Naive thymus-derived CD8-positive, alpha-beta T cell (primary cell): ENCODE measurements at regions of chr17 and their contacts with region 1.

Region 1: GRCh38 chr17:63773381-63774140 is at the start of gene CCDC47:
- DNase-seq: peak; percentile 94 to 99 (median 98)
- ATAC-seq: peak; percentile 86 to 88
- H3K4me3 Mint-ChIP-seq: peak within 1 kb of the TSS; percentile 87 to 99 (median 96)
- H3K27ac Mint-ChIP-seq: peak within 1 kb of the TSS; percentile 91 to 100 (median 99)
- H3K4me1 Mint-ChIP-seq: peaks cover 30 to 80% (median 70%) of the 10 kb centered on the region in 4 donors
- H3K27me3 Mint-ChIP-seq: no peaks in the 10 kb centered on the region
- polyA plus RNA-seq, gene CCDC47: 21.8 to 34.8 (median 26.0) TPM

Region 2: GRCh38 chr17:63707151-63707550 is 66.4 kb before region 1 on chr17:
- POLR2A ChIA-PET with region 1: interaction called, 264 read pairs
- DNase-seq: peak in 5 of 10 donors; percentile 54 to 65 (median 58)
- ATAC-seq: peak; percentile 23 to 67
- H3K4me3 Mint-ChIP-seq: peak overlapping the region; percentile 69 to 98 (median 82)
- H3K27ac Mint-ChIP-seq: peak overlapping the region; percentile 75 to 99 (median 95)
- H3K4me1 Mint-ChIP-seq: peaks cover 42 to 84% (median 79%) of the 10 kb centered on the region in 4 donors
- H3K27me3 Mint-ChIP-seq: no peaks in the 10 kb centered on the region

Region 3: GRCh38 chr17:63785556-63785955 is 12.0 kb after region 1 on chr17:
- POLR2A ChIA-PET with region 1: interaction called, 13 read pairs
- DNase-seq: no peak
- ATAC-seq: no peak
- H3K4me3 Mint-ChIP-seq: no peak overlapping the region
- H3K27ac Mint-ChIP-seq: peak overlapping the region in 3 of 10 donors; percentile 17 to 66 (median 44)
- H3K4me1 Mint-ChIP-seq: peaks cover 18 to 49% (median 40%) of the 10 kb centered on the region in 4 donors
- H3K27me3 Mint-ChIP-seq: no peaks in the 10 kb centered on the region

Region 4: DNA sequence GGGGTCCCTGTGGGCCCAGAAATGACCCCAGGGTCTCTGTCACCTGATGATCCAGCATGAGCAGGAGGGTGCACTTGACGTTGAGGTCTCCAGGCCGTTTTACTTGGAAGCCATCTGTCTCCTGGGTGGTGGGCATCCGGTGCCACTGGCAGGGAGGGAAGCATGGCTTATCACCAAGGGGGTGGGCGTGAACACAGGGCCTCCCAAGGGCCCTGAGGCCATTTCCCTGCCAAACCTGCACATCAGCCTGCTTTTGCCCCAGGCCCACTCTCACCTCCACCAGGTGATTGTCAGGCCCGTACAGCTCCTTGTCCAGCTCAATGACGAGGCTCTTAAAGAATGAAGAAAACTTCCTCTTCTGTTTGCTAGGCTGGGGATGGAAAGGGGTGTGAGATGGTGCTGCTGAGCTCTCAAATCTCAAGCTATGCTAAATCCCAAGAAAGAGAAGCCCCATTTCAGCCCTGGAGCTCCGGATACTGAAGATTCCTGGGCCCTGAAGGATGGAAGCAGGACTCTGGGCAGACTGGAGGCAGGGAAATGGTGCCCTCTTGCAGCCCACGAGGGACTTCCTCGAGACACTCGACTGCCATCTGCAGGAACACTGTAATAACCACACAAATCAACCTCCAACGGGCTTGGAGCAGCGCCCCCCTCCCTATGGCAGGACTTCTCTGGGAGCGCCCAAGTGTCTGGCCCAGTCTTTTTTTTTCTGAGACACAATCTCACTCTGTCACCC is 61.0 kb after region 1 on chr17:
- POLR2A ChIA-PET with region 1: interaction called, 32 read pairs
- DNase-seq: peak; percentile 35 to 79 (median 62)
- ATAC-seq: peak; percentile 83 to 91
- H3K4me3 Mint-ChIP-seq: peak overlapping the region in 2 of 10 donors; percentile 15 to 51
- H3K27ac Mint-ChIP-seq: peak overlapping the region; percentile 48 to 93 (median 84)
- H3K4me1 Mint-ChIP-seq: peaks cover 31 to 78% (median 73%) of the 10 kb centered on the region in 4 donors
- H3K27me3 Mint-ChIP-seq: no peaks in the 10 kb centered on the region

Region 5: DNA sequence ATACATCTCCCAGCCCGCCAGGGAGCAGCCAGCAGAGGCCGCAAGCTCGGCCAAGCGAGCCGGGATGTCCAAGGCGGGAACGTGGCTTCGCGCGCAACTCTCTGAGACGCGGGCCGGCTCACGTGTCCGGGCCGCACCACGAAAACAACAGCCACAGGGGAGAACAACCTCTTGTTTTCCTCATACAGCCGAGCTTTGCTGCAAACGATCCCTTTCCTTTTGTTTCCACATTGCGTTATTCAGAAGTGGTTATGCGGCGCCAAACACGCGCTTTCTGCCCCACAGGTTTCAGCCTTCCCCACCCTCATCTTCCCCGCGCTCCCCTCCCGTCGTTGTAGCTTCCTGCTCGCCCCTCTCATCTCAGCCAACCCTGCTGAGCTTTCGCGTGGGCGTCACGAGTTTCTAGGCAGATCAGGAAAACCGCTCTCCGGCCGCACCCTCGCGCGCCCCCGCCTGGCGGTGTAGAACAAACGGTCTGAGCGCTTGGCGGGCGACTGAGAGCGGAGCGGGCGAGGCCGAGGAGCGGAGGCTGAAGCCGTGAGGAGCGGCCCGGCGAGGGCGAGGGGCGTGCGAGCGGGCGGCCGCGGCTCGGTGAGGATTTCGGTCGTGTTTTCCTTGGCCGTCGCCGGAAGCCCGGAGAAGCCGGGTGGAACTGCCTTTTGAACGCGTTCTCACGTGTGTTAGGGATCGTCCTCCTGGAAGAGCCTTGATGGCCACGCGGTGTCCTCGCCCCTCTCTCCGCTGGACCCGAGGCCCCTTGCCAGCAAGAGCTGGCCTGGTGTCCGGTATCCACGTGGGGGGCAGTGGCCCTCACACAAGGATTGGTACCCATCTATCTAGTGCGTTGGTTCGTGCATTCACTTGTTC is 75.5 kb after region 1 on chr17:
- POLR2A ChIA-PET with region 1: interaction called, 15 read pairs
- DNase-seq: peak; percentile 91 to 96 (median 94)
- ATAC-seq: peak; percentile 95 to 96
- H3K4me3 Mint-ChIP-seq: peak overlapping the region; percentile 71 to 96 (median 86)
- H3K27ac Mint-ChIP-seq: peak overlapping the region; percentile 88 to 98 (median 94)
- H3K4me1 Mint-ChIP-seq: peaks cover 15 to 26% (median 19%) of the 10 kb centered on the region in 4 donors
- H3K27me3 Mint-ChIP-seq: no peaks in the 10 kb centered on the region